SK-N-SH (cell line): ENCODE measurements at regions of chr17 and their contacts with region 1.

Region 1: DNA sequence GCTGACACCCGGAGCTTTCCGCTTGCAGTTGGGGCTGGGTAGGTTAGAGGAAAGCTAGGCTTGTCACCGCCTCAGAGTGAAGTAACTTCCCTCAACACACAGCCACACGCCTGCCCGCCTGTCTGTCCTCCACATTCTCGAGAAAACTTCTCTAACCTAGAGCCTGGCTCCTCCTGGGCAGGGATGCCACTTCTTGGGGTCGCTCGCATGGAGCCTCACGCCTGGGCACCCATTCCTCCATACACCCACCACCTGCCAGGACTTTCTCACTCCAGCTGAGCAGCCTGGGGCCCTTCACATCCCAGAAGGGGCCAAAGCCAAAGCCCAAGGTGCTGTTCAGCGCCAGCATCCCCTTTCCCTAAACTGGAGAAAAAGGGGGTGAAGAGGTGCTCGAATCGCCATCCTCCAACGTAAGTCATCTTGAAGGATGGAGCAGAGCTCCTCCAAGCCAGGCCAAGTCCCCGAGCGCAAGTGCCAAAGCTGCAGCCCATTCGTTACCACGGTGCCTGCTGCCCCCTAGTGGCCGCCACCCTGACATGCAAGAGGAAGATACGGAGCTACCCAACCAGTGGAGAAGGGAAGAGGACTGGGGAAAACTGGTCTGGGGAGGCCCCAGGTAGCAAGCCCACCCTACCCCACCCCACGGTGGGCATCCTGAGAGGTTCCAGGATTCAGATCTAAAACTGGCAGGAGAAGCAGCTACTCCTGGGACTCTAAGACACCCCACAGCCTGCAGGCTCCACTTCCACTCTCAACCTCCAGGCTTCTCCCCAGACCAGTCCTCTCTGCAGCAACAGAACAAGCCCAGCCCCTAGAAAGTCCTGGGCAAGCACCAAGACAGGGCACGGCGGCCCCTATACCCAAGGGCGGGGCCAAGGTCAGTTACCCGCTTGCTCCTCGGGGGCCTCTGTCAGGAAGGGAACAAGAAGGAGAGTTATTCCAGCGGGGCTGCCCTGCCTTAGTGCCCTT is 63.1 kb downstream of the MYO18A start:
- DNase-seq: peak; percentile 85
- H3K4me3 ChIP-seq: no peak overlapping the region; a peak in 1 of 4 replicates
- H3K27ac ChIP-seq: no peak overlapping the region
- H3K4me1 ChIP-seq: peaks cover 0 to 19% of the 10 kb centered on the region in 2 experiments; a peak in 1 of 4 replicates
- H3K27me3 ChIP-seq: no peaks in the 10 kb centered on the region
- CTCF ChIP-seq: peak; percentile 89
- EP300 ChIP-seq: no peak
- RAD21 ChIP-seq: peak; percentile 84

Region 2: GRCh38 chr17:28951991-28952975 is 164.8 kb before region 1 on chr17:
- CTCF ChIA-PET with region 1: interaction called, 947 read pairs
- POLR2A ChIA-PET with region 1: no interaction called
- DNase-seq: peak; percentile 88
- H3K4me3 ChIP-seq: peak overlapping the region; percentile 80 to 81
- H3K27ac ChIP-seq: peak overlapping the region; percentile 99 to 100
- H3K4me1 ChIP-seq: peaks cover 14 to 24% of the 10 kb centered on the region in 2 experiments
- H3K27me3 ChIP-seq: no peaks in the 10 kb centered on the region
- CTCF ChIP-seq: no peak
- EP300 ChIP-seq: no peak
- RAD21 ChIP-seq: no peak

Region 3: GRCh38 chr17:28992625-28993600 is 124.2 kb before region 1 on chr17:
- CTCF ChIA-PET with region 1: interaction called, 25 read pairs
- POLR2A ChIA-PET with region 1: no interaction called
- DNase-seq: no peak
- H3K4me3 ChIP-seq: no peak overlapping the region
- H3K27ac ChIP-seq: no peak overlapping the region
- H3K4me1 ChIP-seq: peaks cover 0 to 27% of the 10 kb centered on the region in 2 experiments; a peak in 1 of 4 replicates
- H3K27me3 ChIP-seq: no peaks in the 10 kb centered on the region
- CTCF ChIP-seq: no peak
- EP300 ChIP-seq: no peak
- RAD21 ChIP-seq: no peak

Region 4: GRCh38 chr17:29048440-29049368 is 68.4 kb before region 1 on chr17:
- CTCF ChIA-PET with region 1: interaction called, 180 read pairs
- POLR2A ChIA-PET with region 1: no interaction called
- DNase-seq: peak; percentile 80
- H3K4me3 ChIP-seq: no peak overlapping the region
- H3K27ac ChIP-seq: peak overlapping the region; percentile 55 to 99
- H3K4me1 ChIP-seq: peaks cover 27 to 64% of the 10 kb centered on the region in 2 experiments
- H3K27me3 ChIP-seq: no peaks in the 10 kb centered on the region
- CTCF ChIP-seq: no peak
- EP300 ChIP-seq: peak in 1 of 2 experiments; percentile 100; a peak in 2 of 4 replicates
- RAD21 ChIP-seq: peak; percentile 20

Region 5: DNA sequence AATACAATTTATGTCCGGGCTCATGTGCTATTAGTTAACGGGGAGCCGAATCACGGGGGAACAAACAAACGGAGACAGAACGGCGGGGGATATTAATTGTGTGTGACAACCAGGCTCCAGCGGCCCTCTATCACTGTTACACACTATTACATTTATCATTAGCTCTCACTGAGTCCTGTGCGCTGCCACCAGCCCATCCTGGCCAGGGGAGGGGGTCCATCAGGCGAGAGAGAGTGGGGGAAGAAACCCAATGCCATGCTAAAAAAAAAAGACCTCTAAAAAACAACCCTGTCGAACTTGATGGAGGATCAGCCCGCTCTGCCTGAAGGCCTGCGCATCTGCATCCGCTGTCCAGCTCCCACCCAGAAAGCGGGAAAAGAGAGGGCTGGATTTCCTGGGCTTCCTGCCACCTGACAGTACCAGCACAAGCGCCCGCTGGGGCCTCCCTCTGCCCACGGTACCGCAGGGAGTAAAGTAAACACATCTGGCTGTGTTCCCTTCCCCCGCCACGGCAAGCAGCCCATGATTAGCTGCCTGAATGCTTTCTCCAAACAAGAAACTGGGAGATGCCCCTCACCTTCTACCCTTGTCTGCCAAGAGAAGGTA is 32.4 kb before region 1 on chr17:
- CTCF ChIA-PET with region 1: interaction called, 31 read pairs
- POLR2A ChIA-PET with region 1: no interaction called
- DNase-seq: peak; percentile 90
- H3K4me3 ChIP-seq: no peak overlapping the region
- H3K27ac ChIP-seq: peak overlapping the region in 1 of 2 experiments; percentile 89; a peak in 2 of 4 replicates
- H3K4me1 ChIP-seq: peaks cover 0 to 17% of the 10 kb centered on the region in 2 experiments; a peak in 2 of 4 replicates
- H3K27me3 ChIP-seq: no peaks in the 10 kb centered on the region
- CTCF ChIP-seq: no peak
- EP300 ChIP-seq: peak in 1 of 2 experiments; percentile 51; a peak in 1 of 4 replicates
- RAD21 ChIP-seq: no peak; the same call in 1 of the 2 replicates

Region 6: GRCh38 chr17:29212681-29213121 is 95.6 kb after region 1 on chr17:
- CTCF ChIA-PET with region 1: interaction called, 13 read pairs
- POLR2A ChIA-PET with region 1: no interaction called
- DNase-seq: no peak
- H3K4me3 ChIP-seq: no peak overlapping the region
- H3K27ac ChIP-seq: no peak overlapping the region
- H3K4me1 ChIP-seq: no peaks in the 10 kb centered on the region; a peak in 1 of 4 replicates
- H3K27me3 ChIP-seq: no peaks in the 10 kb centered on the region
- CTCF ChIP-seq: no peak
- EP300 ChIP-seq: no peak
- RAD21 ChIP-seq: no peak